KBM-7 (cell line): ENCODE measurements at regions of chr9 and their contacts with region 1.

Region 1: DNA sequence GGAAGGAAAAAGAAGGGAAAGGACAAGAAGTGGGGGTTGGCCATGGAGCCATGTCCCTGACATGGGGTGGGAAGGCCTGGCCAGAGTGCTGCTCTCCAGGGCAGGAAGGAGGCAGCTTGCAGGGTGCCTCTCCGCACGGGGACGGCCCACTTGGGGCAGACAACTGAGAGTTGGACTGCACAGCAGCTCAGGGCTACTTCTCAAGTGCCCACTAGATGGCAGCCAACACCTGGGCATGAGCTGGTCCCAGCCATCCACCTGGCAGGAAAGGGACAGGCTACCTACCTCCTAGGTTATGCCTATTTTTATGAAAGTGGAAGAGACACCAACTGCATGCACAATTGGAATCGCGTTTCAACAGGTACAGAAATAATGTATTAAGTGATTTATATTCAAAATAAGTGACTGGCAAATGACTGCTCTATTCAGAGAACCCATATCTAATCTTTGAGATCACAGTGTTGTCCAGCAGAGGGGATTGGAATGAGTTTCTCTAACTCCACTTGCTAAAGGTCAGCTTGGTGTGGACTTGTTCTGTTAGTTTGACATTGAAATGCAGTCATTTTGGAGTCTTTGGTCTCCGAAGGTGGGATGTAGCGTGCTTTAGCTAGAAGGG is 113.4 kb downstream of the SYK start:
- DNase-seq: peak; percentile 77

Region 2: DNA sequence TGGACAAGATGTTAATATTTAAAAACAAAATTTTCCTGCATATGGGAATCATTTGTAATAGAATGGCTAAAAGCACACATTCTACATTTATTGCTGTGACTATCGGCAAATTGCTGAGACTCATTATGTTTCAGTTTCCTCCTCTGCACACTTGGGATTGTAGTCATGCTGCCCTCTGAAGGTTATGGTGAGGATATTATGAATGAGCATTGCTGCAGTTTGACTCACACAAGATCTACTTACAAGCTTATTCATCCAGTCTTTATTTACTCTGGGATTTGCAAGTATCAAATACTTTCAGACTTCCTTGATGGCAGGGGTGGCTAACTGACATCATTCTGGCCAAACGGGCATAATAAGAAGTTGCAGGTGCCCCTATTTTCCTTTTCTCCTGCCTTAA is 518.2 kb after region 1 on chr9:
- in situ Hi-C with region 1: loop called (anchors 10 kb)
- DNase-seq: peak; percentile 39